ENCODE measurements at regions of chr12 and their contacts with region 1.

Region 1: DNA sequence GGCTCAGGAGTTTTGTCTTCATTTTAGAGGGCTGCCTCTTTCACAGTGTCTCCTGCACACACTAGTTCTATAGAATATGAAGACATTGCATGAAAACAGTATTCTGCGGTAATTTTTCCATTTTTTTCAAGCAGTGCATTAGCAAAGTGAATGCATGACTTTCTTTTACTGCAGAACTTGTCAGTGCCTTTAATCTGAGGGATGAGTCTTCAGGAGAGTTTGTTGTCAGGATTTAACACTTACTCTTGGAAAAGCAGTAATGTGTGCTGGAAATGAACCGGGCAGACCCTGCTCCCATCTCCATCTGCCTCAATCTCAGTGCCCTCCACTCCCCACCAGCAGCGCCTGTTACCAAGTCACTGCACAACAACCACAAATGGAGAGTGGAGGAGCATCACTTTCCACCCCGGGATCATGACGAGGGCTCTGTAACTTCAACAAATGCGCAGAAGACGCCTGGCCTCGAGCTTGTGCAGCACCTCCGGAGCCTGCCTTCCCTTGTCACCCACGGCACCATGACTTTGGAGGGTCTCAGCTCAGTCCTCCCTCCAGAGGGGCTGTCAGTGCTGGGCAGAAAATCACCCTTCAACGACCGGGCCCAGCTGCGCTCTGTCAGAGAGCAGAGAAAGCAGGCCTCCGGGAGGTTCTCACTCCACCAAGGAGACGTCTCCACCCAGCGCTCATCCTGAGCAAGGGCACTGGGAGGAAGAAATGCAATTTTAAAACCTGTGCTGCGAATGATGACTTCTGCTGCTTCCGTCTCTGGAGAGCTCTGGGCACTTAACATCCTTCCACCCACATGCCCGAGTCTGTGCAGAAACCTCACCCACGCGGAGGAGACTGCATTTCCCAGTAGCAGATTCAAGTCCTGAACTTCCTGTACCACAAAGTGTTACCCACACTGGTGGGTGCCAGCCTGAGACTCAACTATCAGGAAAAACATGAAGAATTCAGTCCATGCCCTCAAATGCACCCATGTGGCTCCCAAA is 255.7 kb downstream of the ADGRD1 start:
- DNase-seq: no peak
- H3K4me3 Mint-ChIP-seq: no peak overlapping the region
- H3K27ac Mint-ChIP-seq: peak overlapping the region; percentile 68
- H3K4me1 Mint-ChIP-seq: peaks cover 31% of the 10 kb centered on the region
- H3K27me3 Mint-ChIP-seq: no peaks in the 10 kb centered on the region

Region 2: GRCh38 chr12:131092901-131093603 is 116.3 kb before region 1 on chr12:
- intact Hi-C with region 1: loop called (anchors 5 kb)
- DNase-seq: peak; percentile 3
- H3K4me3 Mint-ChIP-seq: peak overlapping the region; percentile 24
- H3K27ac Mint-ChIP-seq: peak overlapping the region; percentile 45
- H3K4me1 Mint-ChIP-seq: peaks cover 21% of the 10 kb centered on the region
- H3K27me3 Mint-ChIP-seq: no peaks in the 10 kb centered on the region

Region 3: GRCh38 chr12:131239384-131240094 is 30.2 kb after region 1 on chr12:
- intact Hi-C with region 1: loop called (anchors 1 kb)
- DNase-seq: no peak
- H3K4me3 Mint-ChIP-seq: no peak overlapping the region
- H3K27ac Mint-ChIP-seq: peak overlapping the region; percentile 42
- H3K4me1 Mint-ChIP-seq: peaks cover 9% of the 10 kb centered on the region
- H3K27me3 Mint-ChIP-seq: no peaks in the 10 kb centered on the region

Region 4: DNA sequence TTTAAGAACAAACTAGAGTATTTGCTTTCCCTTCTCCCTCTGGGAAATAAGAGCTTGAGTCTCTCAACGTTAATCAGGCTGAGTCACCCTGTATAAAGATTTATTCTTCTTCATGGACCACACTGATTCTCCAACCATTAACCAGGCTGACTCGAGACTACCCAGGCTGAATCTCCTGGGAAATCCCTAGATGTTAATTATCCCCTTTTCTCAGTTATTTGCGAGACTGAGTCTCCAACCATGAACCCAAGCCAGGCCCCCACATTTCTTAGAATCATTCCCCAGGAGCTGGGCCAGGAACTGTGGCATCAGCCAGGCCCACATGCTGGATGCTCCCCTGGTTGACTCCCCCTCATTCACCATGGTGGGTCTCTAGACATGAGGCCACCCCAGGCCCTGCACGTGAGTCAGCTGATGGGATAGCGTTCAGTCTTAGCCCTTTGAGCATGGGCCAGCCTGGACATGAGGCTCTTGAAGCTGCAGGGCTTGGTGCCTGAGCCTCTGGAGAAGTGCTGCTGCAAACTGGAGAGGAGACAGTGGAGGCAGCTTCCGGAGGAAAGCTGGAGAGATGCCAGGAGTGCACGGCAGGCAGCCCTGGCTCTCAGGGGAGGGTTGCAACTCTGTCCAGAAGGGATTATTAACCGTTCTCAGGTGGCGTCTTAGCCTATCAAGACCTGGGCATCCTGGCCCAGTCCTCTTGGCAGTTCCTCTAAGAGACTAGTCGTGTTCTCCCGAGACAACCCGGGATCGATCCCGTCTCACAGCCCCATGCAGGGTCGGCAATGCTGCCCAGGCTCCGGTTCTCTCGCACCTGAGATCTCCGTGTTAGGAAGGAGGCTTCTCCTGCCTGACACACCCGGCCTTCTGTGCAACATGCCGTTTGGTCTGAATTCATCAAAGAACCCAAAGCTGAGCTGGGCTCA is 40.9 kb after region 1 on chr12:
- intact Hi-C with region 1: no loop called
- DNase-seq: no peak
- H3K4me3 Mint-ChIP-seq: no peak overlapping the region
- H3K27ac Mint-ChIP-seq: no peak overlapping the region
- H3K4me1 Mint-ChIP-seq: no peaks in the 10 kb centered on the region
- H3K27me3 Mint-ChIP-seq: no peaks in the 10 kb centered on the region

Measured in activated T-helper 1 cell treated with anti-CD3 and anti-CD28 coated beads, Interleukin-12 subunit alpha, Interleukin-12 subunit beta, Interleukin-2, Interleukin-4 antibody, amounts not matched to agents 30 ng/mL and 10 ng/mL and 1 ng/mL, durations not matched to agents 14 hours and 24 hours and 36 hours (primary cell).